Right ventricle myocardium inferior (tissue), 1 donor: ENCODE measurements at regions of chr3 and their contacts with region 1.

Region 1: GRCh38 chr3:66038726-66039589 is at the start of gene MAGI1:
- DNase-seq: peak; percentile 91
- ATAC-seq: peak; percentile 92
- total RNA-seq, gene MAGI1: 33.1 TPM

Region 2: GRCh38 chr3:65936908-65937638 is 101.9 kb before region 1 on chr3:
- intact Hi-C with region 1: loop called (anchors 5 kb)
- DNase-seq: no peak
- ATAC-seq: no peak

Region 3: DNA sequence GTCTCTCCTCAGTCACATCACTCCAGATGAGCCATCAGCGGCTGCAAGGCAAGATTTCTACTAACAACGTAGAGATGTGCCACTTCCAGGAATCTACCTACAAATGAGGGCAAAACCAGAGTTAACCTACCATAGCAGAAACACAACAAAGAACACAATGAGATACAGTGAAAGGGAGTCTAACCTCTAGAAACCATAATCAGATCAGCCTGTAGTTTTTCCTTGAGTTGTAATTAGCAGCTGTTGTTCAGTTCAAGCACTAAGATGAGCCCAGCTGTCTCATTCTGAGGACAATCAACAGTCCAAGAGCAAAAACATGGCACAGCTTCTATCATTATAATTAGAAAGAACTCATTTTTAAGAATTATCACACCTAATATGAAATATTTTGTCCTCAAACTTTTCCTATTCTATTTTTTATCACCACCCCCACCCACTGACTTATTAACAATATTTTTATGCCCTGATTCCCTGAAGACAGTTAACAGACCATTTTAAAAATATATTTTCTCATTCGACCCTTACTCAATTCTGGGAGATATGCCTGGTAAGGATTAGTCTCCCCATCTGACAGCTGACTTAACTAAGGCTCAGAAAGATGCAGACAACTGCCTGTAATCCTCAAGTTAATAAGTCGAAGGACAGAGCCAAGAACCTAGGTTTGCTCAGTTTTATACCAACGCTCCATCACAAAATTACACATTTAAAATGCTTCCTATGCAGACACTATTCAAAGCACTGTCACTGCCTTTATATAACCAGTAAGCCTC is 50.4 kb before region 1 on chr3:
- intact Hi-C with region 1: loop called (anchors 5 kb)
- DNase-seq: no peak
- ATAC-seq: no peak

Region 4: GRCh38 chr3:66179793-66180192 is 140.8 kb after region 1 on chr3:
- intact Hi-C with region 1: loop called (anchors 5 kb)
- DNase-seq: no peak
- ATAC-seq: no peak